Posterior cingulate gyrus (tissue), 11 donors: ENCODE measurements at regions of chr9 and their contacts with region 1.

Region 1: GRCh38 chr9:135343837-135344522 is 135.6 kb upstream of the PPP1R26 start:
- DNase-seq: peak; percentile 43 to 94 (median 76)

Region 2: DNA sequence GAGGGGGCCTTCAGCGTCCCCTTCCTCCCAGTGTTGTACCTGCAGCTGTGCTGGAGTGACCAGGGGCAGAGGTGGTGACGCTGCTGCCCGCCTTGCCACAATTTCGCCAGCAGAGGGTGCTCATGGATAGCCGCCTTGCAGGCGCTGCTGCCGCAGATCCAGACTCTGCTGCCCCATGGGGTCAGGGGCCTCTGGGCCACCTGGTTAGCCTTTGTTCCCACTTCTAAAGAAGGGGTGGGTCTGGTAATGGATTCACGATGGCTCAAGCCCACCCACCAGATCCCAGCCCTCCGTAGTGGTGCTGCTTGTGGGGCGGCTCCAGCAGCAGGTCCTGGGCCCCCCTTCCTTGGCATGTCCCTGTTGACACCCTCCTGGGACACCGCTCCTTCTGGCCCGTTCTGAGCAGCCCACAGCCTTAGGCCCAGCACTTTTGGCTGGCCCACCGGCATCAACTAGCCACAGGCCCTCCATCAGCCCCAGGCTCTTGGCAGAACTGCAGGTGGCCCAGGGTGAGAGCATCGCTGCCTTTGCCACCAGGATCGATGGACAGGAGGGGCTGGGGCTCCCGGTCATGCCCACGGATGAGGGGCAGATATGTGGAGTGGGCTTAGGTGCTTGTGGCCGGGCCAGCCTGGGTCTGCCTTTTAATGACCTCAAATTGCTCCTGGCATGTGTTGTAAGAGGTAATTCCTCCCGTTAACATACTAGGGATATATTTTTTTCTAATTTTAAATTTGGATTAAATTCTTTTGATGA is 645.2 kb before region 1 on chr9:
- intact Hi-C with region 1: loop called (anchors 5 kb)
- DNase-seq: peak; percentile 52 to 95 (median 70)

Region 3: GRCh38 chr9:135085830-135086546 is 258.0 kb before region 1 on chr9:
- intact Hi-C with region 1: loop called (anchors 1 kb)
- DNase-seq: peak; percentile 73 to 98 (median 88)

Region 4: DNA sequence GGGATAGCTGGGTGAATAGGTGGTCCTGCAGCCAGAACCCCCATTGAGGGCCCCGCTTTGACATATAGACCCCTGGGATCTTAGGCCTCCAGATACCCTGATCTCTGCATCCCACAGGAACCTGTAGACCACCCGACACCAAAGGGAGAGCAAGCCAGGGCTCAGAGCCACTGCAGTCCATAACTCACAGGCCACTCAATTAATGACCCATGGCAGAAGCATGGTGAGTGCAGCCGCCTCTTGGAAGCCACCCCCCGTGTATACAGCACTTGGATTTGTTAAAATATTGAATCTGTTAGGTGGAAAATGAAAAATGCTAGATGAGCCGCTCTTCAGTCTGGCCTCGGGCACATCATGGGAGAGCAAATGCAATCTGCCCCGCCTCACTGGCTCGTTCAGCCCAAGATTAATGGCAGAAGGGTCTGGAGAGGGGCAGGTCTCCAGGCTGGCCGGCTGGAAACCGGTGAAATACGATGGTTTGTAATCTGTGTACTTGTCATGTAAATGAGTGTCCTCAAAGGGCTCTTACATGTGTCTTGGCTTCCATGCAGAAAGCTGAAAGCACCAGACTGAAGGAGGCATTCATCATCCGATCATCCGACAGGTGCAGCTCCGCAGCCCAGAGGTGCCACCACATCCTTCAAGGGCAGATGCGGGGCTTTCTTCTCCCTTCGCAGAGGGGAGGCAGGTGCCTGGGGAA is 145.2 kb before region 1 on chr9:
- intact Hi-C with region 1: no loop called
- DNase-seq: no peak

Region 5: DNA sequence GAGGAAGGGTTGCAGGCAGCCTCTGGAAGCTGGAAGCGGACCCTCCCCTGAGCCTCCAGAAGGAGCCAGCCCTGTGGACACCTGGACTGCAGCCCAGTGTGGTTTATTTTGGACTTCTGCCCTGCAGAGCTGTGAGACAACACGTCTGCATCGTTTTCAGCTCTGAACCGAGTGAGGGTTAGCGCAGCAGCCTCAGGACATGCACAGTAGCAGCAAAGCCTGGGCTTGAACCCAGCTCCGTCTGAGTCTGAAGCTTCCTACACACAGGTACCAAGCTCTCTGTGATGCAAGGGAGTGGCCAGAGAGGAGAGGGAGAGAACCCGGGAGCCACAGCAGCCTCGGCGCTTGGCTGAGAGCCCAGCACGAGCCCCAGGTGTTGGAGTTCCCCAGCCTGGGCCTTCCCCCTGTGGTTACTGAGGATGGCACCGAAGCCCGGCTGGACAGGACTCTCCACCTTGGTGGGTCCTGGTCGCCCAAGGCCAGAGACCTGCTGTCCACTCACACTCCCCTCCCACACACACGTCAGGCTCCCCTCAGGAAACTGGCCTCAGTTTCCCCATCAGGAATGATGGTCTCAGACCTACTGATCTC is 128.3 kb before region 1 on chr9:
- intact Hi-C with region 1: no loop called
- DNase-seq: peak in 4 of 10 donors; percentile 27 to 85 (median 68)

Region 6: DNA sequence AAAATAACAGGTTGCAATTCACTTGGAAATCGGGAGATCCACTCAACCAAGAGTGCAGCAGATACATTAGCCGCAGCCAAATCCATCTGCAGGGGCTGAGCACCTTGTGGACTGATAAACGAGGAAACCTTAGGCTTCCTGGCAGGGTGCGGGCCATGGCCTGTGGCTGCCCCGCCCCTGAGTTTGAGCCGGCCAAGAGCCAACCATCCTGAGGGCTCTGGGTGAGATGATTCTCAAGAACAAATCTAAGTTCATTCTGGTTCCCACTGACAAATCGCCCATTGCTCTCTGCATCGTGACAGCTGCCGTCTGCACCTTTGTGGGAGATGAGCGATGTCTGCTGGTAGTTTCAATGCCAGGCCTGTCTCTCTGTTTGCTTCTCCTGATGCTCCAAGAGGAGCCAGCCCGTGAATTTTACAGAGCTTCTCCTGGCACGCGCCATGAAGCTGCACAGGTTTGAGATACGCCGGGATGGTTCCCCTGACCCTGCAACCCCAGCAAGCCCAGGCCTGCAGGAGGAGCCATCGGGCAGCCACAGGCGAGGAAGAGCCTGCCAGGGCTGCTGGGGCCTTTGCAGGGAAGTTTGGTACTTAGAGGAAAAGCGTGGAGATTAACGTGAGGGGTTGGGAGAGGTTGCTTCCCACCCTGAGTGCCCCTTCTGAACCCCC is 102.5 kb before region 1 on chr9:
- intact Hi-C with region 1: loop called (anchors 5 kb)
- DNase-seq: peak in 5 of 10 donors; percentile 33 to 87 (median 80)

Region 7: GRCh38 chr9:135273008-135273407 is 71.0 kb before region 1 on chr9:
- intact Hi-C with region 1: no loop called
- DNase-seq: peak in 2 of 10 donors; percentile 23 to 47